Activated naive CD4-positive, alpha-beta T cell treated with anti-CD3 and anti-CD28 coated beads for 36 hours (primary cell): ENCODE measurements at regions of chr9 and their contacts with region 1.

Region 1: GRCh38 chr9:75088260-75088905 is at the start of gene OSTF1:
- DNase-seq: peak; percentile 93
- H3K4me3 Mint-ChIP-seq: peak within 1 kb of the TSS; percentile 95
- H3K27ac Mint-ChIP-seq: peak within 1 kb of the TSS; percentile 94
- H3K4me1 Mint-ChIP-seq: peaks cover 61% of the 10 kb centered on the region
- H3K27me3 Mint-ChIP-seq: no peaks in the 10 kb centered on the region
- total RNA-seq, gene OSTF1: 102 to 104 TPM

Region 2: DNA sequence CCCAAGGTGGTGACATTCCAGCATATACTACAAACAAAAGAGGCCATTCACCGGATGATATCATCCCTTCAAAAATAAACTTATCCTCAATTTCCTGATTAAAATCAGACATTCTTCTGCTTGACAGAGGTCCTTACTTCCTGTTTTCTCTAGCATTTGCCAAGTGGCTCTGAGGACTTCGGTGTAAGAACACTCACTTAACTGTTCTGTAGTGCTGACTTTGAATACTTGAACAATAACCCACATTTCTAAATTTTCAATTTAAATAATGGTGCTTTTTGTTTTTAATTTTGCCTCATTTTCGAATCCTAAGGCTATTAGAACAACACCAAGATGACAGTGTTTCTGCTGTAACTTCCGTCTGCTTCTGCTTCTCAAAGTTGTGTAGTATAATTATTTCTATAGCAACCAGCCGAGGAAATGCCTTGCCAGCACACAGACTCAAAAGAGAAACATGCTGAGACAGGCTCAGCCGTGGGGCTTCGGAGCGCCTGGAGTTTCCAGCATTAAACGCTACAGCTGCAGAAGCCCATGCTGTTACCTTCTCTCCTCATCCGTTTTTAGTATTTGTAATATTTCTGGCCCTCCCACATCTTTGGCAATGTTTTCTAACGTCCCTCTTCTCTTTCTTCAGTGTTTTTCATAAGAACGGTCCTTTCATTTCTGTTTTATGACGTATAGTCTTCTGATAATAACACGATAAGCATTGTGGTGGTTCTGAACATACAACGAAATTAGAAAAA is 1956.2 kb before region 1 on chr9:
- CTCF ChIA-PET with region 1: no interaction called
- intact Hi-C with region 1: loop called (anchors 5 kb)
- DNase-seq: peak; percentile 76
- H3K4me3 Mint-ChIP-seq: peak overlapping the region; percentile 79
- H3K27ac Mint-ChIP-seq: peak overlapping the region; percentile 86
- H3K4me1 Mint-ChIP-seq: peaks cover 25% of the 10 kb centered on the region
- H3K27me3 Mint-ChIP-seq: no peaks in the 10 kb centered on the region

Region 3: GRCh38 chr9:75027187-75028107 is 60.9 kb before region 1 on chr9:
- CTCF ChIA-PET with region 1: interaction called, 4 read pairs
- intact Hi-C with region 1: loop called (anchors 1 kb)
- DNase-seq: peak; percentile 53
- H3K4me3 Mint-ChIP-seq: peak overlapping the region; percentile 99
- H3K27ac Mint-ChIP-seq: peak overlapping the region; percentile 96
- H3K4me1 Mint-ChIP-seq: peaks cover 32% of the 10 kb centered on the region
- H3K27me3 Mint-ChIP-seq: no peaks in the 10 kb centered on the region

Region 4: GRCh38 chr9:75111019-75111622 is 22.7 kb after region 1 on chr9:
- CTCF ChIA-PET with region 1: interaction called, 3 read pairs
- intact Hi-C with region 1: loop called (anchors 2 kb)
- DNase-seq: no peak
- H3K4me3 Mint-ChIP-seq: no peak overlapping the region
- H3K27ac Mint-ChIP-seq: no peak overlapping the region
- H3K4me1 Mint-ChIP-seq: peaks cover 49% of the 10 kb centered on the region
- H3K27me3 Mint-ChIP-seq: no peaks in the 10 kb centered on the region

Region 5: DNA sequence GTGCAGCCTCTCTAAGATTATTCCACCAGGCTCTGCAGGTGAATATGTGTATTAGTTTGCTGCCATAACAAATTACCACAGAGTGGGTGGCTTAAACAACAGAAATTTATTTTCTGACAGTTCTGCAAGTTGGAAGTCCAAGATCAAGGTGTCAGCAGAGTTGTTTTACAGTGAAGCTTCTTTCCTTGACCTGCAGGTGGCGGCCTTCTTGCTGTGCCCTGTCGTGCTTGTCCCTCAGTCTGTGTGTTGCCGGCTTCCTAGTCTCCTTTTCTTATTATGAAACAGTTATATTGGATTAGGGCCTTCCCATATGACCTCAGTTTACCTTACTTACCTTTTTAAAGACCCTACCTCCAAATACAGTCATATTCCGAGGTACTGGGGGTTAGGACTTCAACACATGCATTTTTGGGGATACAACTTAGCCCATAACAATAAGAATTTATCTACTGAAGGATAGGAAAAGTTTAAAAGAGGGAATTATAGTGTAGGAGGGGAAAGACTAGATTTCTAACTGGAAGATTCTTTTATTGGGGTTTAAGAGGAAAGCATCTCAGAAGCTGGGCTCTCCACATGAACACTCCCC is 97.3 kb after region 1 on chr9:
- CTCF ChIA-PET with region 1: interaction called, 5 read pairs
- intact Hi-C with region 1: loop called (anchors 1 kb)
- DNase-seq: peak; percentile 72
- H3K4me3 Mint-ChIP-seq: no peak overlapping the region
- H3K27ac Mint-ChIP-seq: no peak overlapping the region
- H3K4me1 Mint-ChIP-seq: peaks cover 16% of the 10 kb centered on the region
- H3K27me3 Mint-ChIP-seq: no peaks in the 10 kb centered on the region

Region 6: GRCh38 chr9:76393963-76394679 is 1305.7 kb after region 1 on chr9 and contains the start of gene RFK:
- CTCF ChIA-PET with region 1: no interaction called
- intact Hi-C with region 1: loop called (anchors 5 kb)
- DNase-seq: peak; percentile 94
- H3K4me3 Mint-ChIP-seq: peak within 1 kb of the TSS; percentile 96
- H3K27ac Mint-ChIP-seq: peak within 1 kb of the TSS; percentile 92
- H3K4me1 Mint-ChIP-seq: peaks cover 25% of the 10 kb centered on the region
- H3K27me3 Mint-ChIP-seq: no peaks in the 10 kb centered on the region
- total RNA-seq, gene RFK: 4.2 to 5.2 TPM